ENCODE measurements at regions of chr1 and their contacts with region 1.

Region 1: GRCh38 chr1:92831762-92832536 is at the start of gene RPL5:
- DNase-seq: peak; percentile 92 to 99 (median 94)
- ATAC-seq: peak; percentile 86 to 92 (median 87)
- H3K4me3 ChIP-seq: peak within 1 kb of the TSS; percentile 91 to 97
- H3K4me3 Mint-ChIP-seq: peak within 1 kb of the TSS; percentile 97 to 100 (median 99)
- H3K27ac ChIP-seq: peak within 1 kb of the TSS; percentile 92
- H3K27ac Mint-ChIP-seq: peak within 1 kb of the TSS; percentile 92 to 99
- H3K4me1 ChIP-seq: peaks cover 18 to 22% of the 10 kb centered on the region in 2 experiments
- H3K4me1 Mint-ChIP-seq: peaks cover 45 to 51% (median 49%) of the 10 kb centered on the region in 3 donors
- H3K27me3 ChIP-seq: no peaks in the 10 kb centered on the region
- H3K27me3 Mint-ChIP-seq: no peaks in the 10 kb centered on the region
- total RNA-seq, gene RPL5: 1,327 to 1,558 (median 1,433) TPM

Region 2: GRCh38 chr1:92845908-92846307 is 14.0 kb after region 1 on chr1:
- CTCF ChIA-PET with region 1: interaction called, 4 to 5 read pairs
- POLR2A ChIA-PET with region 1: interaction called, 4 to 11 read pairs
- DNase-seq: no peak
- ATAC-seq: no peak
- H3K4me3 ChIP-seq: no peak overlapping the region
- H3K4me3 Mint-ChIP-seq: no peak overlapping the region
- H3K27ac ChIP-seq: no peak overlapping the region
- H3K27ac Mint-ChIP-seq: peak overlapping the region in 1 of 2 donors; percentile 31
- H3K4me1 ChIP-seq: no peaks in the 10 kb centered on the region
- H3K4me1 Mint-ChIP-seq: peaks cover 4 to 5% (median 5%) of the 10 kb centered on the region in 3 donors
- H3K27me3 ChIP-seq: no peaks in the 10 kb centered on the region
- H3K27me3 Mint-ChIP-seq: no peaks in the 10 kb centered on the region

Region 3: DNA sequence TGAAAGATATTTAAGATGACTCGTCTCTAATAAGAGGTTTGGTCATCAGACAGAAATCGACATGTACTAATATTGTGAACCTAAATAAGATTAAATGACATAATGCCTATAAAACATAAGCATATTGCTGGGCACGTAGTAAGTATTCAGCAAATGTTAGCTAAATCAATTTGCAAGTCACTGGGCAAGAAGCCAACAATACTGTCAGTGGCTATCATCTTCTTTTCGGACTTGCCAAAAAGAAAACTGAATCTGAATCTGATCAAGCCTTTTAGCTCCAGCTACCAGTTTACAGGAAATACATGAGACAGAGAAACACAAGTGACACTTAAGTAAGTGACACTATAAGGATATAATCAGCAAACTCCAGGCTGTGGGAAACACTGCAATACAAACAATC is 45.8 kb after region 1 on chr1:
- CTCF ChIA-PET with region 1: no interaction called
- POLR2A ChIA-PET with region 1: no interaction called
- DNase-seq: peak in 1 of 35 experiments; percentile 48
- ATAC-seq: peak in 3 of 4 experiments; percentile 26 to 39 (median 33)
- H3K4me3 ChIP-seq: no peak overlapping the region
- H3K4me3 Mint-ChIP-seq: peak overlapping the region; percentile 6 to 53 (median 11)
- H3K27ac ChIP-seq: peak overlapping the region; percentile 43
- H3K27ac Mint-ChIP-seq: peak overlapping the region; percentile 71 to 89
- H3K4me1 ChIP-seq: peaks cover 11 to 31% of the 10 kb centered on the region in 2 experiments
- H3K4me1 Mint-ChIP-seq: peaks cover 36 to 41% (median 39%) of the 10 kb centered on the region in 3 donors
- H3K27me3 ChIP-seq: no peaks in the 10 kb centered on the region
- H3K27me3 Mint-ChIP-seq: no peaks in the 10 kb centered on the region

Measured in T-cell (primary cell).